ENCODE measurements at regions of chr4 and their contacts with region 1.

Region 1: GRCh38 chr4:73662709-73663546 is 42.7 kb upstream of the RASSF6 start:
- DNase-seq: no peak
- H3K4me3 ChIP-seq: no peak overlapping the region
- H3K27ac ChIP-seq: no peak overlapping the region
- H3K27me3 ChIP-seq: no peaks in the 10 kb centered on the region
- CTCF ChIP-seq: peak; percentile 60

Region 2: DNA sequence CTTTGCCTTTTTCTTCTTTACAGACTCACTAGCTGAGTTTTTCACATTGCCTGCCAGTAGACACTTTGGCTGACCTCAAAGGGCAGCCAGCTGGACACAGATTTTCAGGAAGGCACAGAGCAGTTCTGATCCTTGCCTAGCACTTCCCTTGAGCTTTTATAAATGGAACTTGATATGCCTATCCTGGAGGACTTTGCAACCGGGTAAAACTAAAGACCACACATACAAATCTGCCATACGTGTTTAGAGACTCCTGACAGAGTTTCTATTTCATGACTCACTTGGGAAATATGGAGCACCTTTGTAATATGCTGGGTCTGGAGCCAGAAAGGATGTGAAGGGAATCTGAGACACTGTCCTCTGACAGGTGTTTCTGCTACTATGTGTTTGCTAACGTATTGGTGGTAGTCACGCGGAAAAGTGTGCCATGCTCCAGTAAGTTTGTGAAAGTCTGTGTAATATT is 14.0 kb after region 1 on chr4:
- CTCF ChIA-PET with region 1: interaction called, 32 read pairs
- POLR2A ChIA-PET with region 1: interaction called, 8 read pairs
- DNase-seq: peak; percentile 85
- H3K4me3 ChIP-seq: no peak overlapping the region
- H3K27ac ChIP-seq: peak overlapping the region; percentile 33
- H3K27me3 ChIP-seq: no peaks in the 10 kb centered on the region
- CTCF ChIP-seq: no peak

Region 3: DNA sequence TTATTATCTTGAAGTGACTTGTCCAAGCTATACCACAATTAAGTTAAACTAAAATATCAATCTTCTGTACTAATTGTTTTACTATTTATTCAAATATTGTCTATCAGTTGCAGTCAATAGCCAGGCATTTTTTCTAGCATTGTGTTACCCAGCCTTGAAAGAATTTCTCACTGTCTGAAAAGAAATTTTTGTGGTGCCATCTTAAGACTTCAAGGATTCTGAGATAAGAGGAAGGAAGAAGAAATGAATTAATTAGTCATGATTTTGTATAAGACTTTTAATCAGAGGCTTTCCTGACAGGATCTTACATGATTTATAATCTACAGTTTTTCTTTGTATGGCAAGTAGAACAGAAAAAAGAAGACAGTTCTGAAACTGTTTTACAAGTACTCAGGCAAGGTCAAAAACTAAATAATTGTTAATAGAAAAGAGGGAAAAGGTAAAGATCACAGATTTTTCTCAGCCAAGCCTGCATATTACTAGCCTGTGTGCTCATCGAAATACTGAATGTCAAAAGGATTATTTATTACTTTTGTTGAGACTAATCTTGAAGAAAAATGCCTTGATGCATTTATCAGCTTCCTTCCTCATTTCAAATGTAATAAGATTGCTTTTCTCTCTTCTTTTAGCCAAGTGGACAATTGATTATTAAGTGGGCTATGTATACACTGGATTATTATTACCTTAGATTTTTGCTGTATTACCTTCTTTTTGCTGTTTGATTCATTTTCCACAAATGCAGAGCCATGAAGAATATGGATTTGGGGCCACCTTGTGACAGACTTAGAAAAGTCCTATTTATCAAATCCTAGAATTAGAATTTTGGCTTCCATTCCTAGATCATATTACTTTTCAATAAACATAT is 260.1 kb after region 1 on chr4:
- CTCF ChIA-PET with region 1: interaction called, 50 read pairs
- POLR2A ChIA-PET with region 1: no interaction called
- DNase-seq: no peak
- H3K4me3 ChIP-seq: no peak overlapping the region
- H3K27ac ChIP-seq: no peak overlapping the region
- H3K27me3 ChIP-seq: no peaks in the 10 kb centered on the region
- CTCF ChIP-seq: peak; percentile 54